ENCODE measurements at regions of chr1 and their contacts with region 1.

Region 1: GRCh38 chr1:14108356-14109275 is 408.6 kb downstream of the PRDM2 start:
- DNase-seq: no peak
- H3K4me3 ChIP-seq: no peak overlapping the region
- CTCF ChIP-seq: no peak

Region 2: DNA sequence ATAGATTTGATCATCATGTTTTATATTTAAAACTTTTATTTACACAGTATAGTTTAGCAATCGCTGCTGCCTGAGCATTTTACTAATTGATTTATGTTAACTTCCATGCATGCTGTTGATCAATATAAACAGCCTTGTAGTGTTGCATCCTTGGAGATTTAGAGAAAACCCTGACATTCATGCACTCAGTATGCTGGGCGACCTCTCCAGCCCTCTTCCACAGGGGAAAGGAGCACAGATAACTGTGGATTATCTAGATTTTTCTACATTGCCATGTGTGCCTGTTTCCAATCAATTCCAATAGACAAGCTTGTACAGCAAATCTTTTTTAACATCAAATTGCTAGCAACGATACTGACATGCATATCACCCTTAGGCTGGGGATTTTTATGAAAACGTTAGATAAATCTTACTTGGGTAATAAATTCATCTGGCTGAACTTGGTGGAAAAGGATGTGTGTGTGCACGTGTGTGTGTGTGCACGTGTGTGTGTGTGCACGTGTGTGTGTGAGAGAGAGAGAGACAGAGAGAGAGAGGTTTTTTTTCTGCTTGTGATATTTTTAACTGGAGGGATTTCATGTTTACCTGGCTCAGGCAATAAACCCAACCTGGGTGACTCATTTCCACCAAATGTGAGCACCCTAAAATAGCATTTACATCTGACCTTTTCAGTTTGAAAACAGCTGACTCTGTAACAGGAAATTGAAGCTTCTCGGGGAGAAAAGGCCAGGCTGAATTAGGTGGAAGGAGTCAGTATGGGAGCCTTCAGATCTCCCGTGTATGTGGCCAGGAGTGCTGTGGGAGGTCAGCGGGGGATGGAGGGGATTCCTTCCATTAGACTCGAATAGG is 68.8 kb before region 1 on chr1:
- in situ Hi-C with region 1: loop called (anchors 10 kb)
- DNase-seq: no peak
- H3K4me3 ChIP-seq: no peak overlapping the region
- CTCF ChIP-seq: no peak

Region 3: GRCh38 chr1:14149431-14149830 is 40.8 kb after region 1 on chr1:
- in situ Hi-C with region 1: no loop called
- DNase-seq: no peak
- H3K4me3 ChIP-seq: no peak overlapping the region
- CTCF ChIP-seq: peak; percentile 38

Region 4: DNA sequence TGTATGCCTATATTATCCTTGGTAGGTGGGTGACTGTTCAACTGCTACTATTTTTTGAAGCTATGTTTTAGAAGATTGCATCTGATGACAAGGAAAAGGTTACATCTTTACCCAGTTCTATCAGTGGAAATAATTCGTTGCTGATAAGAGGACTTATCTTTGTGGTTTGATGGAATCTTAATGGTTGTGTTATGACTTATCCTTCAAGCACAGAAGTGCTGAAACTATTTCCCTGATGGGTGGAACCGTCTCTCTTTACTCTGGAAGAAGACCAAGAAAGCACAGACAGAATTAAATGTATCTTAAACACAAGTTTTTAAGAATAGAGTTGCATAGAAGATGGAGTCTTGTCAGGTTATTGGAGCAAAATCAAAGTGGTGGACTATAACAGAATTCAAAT is 52.2 kb after region 1 on chr1:
- in situ Hi-C with region 1: no loop called
- DNase-seq: no peak
- H3K4me3 ChIP-seq: no peak overlapping the region
- CTCF ChIP-seq: no peak

Region 5: DNA sequence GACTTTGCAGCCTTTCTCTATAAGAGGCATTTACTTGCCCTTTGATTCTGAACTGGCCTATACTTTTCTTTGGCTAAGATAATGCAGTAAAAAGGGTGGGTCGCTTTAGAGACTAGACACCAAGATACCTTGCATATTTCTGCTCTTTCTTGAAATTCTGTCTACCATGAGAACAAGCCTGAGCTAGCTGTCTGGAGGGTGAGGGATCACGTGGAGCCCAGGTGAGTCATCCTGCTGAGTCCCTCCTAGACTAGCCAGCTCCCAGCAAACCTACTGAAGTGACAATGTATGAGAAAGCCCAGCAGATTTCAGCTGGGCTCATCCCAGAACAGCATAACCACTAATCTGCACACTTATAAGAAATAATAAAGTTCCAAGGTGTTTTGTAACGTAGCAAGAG is 81.9 kb after region 1 on chr1:
- in situ Hi-C with region 1: no loop called
- DNase-seq: peak; percentile 6
- H3K4me3 ChIP-seq: no peak overlapping the region
- CTCF ChIP-seq: no peak